Adrenal gland (tissue), 19 donors: ENCODE measurements at regions of chr19 and their contacts with region 1.

Region 1: GRCh38 chr19:51688672-51689571 is 4.2 kb upstream of the SPACA6 start:
- DNase-seq: peak; percentile 92 to 97 (median 96)
- H3K4me3 ChIP-seq: peak overlapping the region; percentile 24 to 97 (median 76)
- H3K27ac ChIP-seq: peak overlapping the region; percentile 82 to 97 (median 90)
- H3K4me1 ChIP-seq: peaks cover 25 to 47% of the 10 kb centered on the region in 2 donors
- H3K27me3 ChIP-seq: no peaks in the 10 kb centered on the region
- CTCF ChIP-seq: peak in 4 of 6 experiments; percentile 32 to 61 (median 48)
- POLR2A ChIP-seq: peak in 1 of 2 donors; percentile 56

Region 2: GRCh38 chr19:51777570-51778462 is 88.9 kb after region 1 on chr19:
- intact Hi-C with region 1: loop called in 1 of 2 experiments (anchors 10 kb)
- DNase-seq: peak; percentile 56 to 85 (median 73)
- H3K4me3 ChIP-seq: no peak overlapping the region
- H3K27ac ChIP-seq: no peak overlapping the region
- H3K4me1 ChIP-seq: no peaks in the 10 kb centered on the region
- H3K27me3 ChIP-seq: peaks cover 8% of the 10 kb centered on the region
- CTCF ChIP-seq: peak; percentile 59 to 84 (median 78)
- POLR2A ChIP-seq: no peak